ENCODE measurements at regions of chr14 and their contacts with region 1.

Region 1: GRCh38 chr14:103391048-103391447 is 5.8 kb downstream of the MARK3 start:
- DNase-seq: no peak
- ATAC-seq: no peak
- H3K4me3 ChIP-seq: no peak overlapping the region
- H3K27ac ChIP-seq: peak overlapping the region in 3 of 4 donors; percentile 5 to 83 (median 32)
- H3K4me1 ChIP-seq: peaks cover 58 to 70% of the 10 kb centered on the region in 2 donors
- H3K27me3 ChIP-seq: no peaks in the 10 kb centered on the region
- CTCF ChIP-seq: peak; percentile 34 to 57 (median 40)
- POLR2A ChIP-seq: no peak

Region 2: DNA sequence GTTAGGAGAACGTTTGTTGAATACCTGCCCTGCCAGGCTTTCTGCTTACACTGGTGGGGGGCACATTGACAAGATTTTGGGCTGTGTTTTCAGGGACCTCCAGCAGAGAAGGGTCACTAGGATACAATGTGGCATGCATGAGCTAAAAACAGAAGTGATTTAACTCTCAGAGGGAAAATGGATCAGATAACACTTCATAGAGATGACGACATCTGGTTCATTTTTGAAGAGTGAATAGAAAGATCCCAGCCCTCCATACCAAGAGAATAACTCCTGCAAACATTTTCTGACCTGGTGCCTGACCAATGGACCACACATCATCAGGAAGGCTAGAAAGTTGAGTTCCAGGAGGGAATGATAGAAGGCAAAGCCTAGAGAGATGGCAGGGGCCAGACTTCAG is 97.9 kb after region 1 on chr14:
- in situ Hi-C with region 1: no loop called
- intact Hi-C with region 1: loop called (anchors 5 kb)
- DNase-seq: no peak
- ATAC-seq: peak; percentile 74 to 88
- H3K4me3 ChIP-seq: peak overlapping the region in 1 of 4 donors; percentile 16
- H3K27ac ChIP-seq: peak overlapping the region; percentile 73 to 88 (median 80)
- H3K4me1 ChIP-seq: peaks cover 33 to 37% of the 10 kb centered on the region in 2 donors
- H3K27me3 ChIP-seq: no peaks in the 10 kb centered on the region
- CTCF ChIP-seq: no peak
- POLR2A ChIP-seq: no peak

Region 3: DNA sequence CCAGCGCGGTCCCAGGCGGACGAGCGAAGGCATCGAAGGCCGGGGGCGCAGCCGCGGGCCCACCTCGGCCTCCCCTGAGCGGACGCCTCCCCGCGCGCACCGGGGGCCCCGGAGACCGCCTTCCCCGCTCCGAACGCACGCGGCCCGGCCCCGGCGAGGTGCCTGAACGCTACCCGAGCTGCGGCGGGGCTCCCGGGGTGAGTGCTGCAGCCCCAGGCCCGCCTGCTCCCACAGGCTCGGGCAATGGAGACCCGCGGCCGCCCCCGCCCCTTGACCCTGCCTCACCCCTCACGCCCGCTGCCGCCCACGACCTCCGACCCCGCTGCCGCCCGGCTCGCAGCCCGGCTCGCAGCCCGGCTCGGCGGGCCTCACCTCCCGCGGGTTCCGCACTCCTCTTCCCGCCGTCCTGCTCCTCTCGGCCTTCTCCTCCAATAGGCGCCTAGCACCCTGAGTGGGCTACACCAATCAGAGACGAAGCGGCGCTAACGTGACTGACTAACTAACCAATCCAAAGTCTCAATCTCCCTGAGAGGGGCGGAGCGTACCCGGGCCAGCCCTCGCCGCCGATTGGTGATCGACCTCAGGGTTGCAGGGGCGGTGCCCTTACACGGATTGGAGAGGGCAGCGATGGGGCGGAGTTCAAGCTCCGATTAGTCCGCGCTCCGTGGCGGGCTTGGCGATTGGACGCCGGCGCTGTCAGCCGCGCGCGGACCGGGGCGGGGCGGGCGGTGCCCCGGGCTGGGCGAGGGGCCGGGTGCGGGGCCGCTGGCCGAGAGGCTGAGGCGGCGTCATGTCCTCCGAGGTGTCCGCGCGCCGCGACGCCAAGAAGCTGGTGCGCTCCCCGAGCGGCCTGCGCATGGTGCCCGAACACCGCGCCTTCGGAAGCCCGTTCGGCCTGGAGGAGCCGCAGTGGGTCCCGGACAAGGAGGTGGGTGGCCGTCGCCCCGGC is 324.3 kb after region 1 on chr14 and contains the starts of genes XRCC3 and ZFYVE21:
- in situ Hi-C with region 1: no loop called
- intact Hi-C with region 1: loop called (anchors 10 kb)
- DNase-seq: peak; percentile 100
- ATAC-seq: peak; percentile 94
- H3K4me3 ChIP-seq: peak within 1 kb of the TSS; percentile 61 to 79 (median 68)
- H3K27ac ChIP-seq: peak within 1 kb of the TSS; percentile 78 to 91 (median 84)
- H3K4me1 ChIP-seq: peaks cover 56 to 65% of the 10 kb centered on the region in 2 donors
- H3K27me3 ChIP-seq: no peaks in the 10 kb centered on the region
- CTCF ChIP-seq: no peak
- POLR2A ChIP-seq: peak; percentile 91 to 94
- total RNA-seq, gene XRCC3: 1.3 to 26.5 (median 3.0) TPM
- total RNA-seq, gene ZFYVE21: 16.2 to 25.8 (median 20.2) TPM